Aorta (tissue), 5 donors: ENCODE measurements at regions of chr18 and their contacts with region 1.

Region 1: GRCh38 chr18:25883091-25883490 is 207.3 kb downstream of the SS18 start:
- DNase-seq: no peak
- ATAC-seq: no peak
- H3K4me3 ChIP-seq: no peak overlapping the region
- H3K27ac ChIP-seq: no peak overlapping the region
- H3K4me1 ChIP-seq: no peaks in the 10 kb centered on the region
- H3K27me3 ChIP-seq: no peaks in the 10 kb centered on the region

Region 2: DNA sequence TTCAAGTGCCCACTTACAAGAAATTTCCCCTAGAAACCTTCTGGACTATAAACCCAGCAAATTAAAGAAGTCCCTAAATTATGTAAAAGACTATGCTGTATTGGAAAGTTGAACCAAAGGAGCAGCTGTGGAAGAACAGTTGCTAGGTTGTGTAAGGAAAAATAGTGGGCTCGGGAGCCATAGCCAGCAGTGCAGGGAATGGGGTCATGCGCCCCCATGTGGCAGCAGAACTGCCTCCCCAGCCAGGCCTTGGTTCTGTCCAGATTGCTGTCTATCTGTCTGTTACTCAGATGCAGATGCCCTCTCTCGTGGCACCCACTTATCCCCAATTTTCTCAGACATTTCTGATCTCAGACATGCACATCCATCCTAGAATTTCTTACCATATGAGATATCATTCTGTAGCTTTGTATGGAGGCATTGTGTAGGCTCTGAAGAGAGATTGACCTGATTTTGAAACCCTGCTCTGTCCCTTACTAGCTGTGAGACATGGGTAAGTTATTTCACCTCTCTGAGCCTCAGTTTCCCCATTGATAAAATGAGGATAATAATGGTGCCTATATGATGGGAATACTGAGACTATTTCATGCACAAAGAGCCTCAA is 51.0 kb before region 1 on chr18:
- intact Hi-C with region 1: no loop called
- DNase-seq: no peak
- ATAC-seq: peak; percentile 68
- H3K4me3 ChIP-seq: no peak overlapping the region
- H3K27ac ChIP-seq: no peak overlapping the region
- H3K4me1 ChIP-seq: no peaks in the 10 kb centered on the region
- H3K27me3 ChIP-seq: no peaks in the 10 kb centered on the region

Region 3: GRCh38 chr18:25896178-25896780 is 13.2 kb after region 1 on chr18:
- intact Hi-C with region 1: loop called in 1 of 2 experiments (anchors 2 kb)
- DNase-seq: no peak
- ATAC-seq: no peak
- H3K4me3 ChIP-seq: no peak overlapping the region
- H3K27ac ChIP-seq: no peak overlapping the region
- H3K4me1 ChIP-seq: no peaks in the 10 kb centered on the region
- H3K27me3 ChIP-seq: no peaks in the 10 kb centered on the region

Region 4: GRCh38 chr18:25976554-25976953 is 93.5 kb after region 1 on chr18:
- intact Hi-C with region 1: no loop called
- DNase-seq: no peak
- ATAC-seq: no peak
- H3K4me3 ChIP-seq: no peak overlapping the region
- H3K27ac ChIP-seq: no peak overlapping the region
- H3K4me1 ChIP-seq: no peaks in the 10 kb centered on the region
- H3K27me3 ChIP-seq: no peaks in the 10 kb centered on the region